ENCODE measurements at regions of chr6 and their contacts with region 1.

Region 1: DNA sequence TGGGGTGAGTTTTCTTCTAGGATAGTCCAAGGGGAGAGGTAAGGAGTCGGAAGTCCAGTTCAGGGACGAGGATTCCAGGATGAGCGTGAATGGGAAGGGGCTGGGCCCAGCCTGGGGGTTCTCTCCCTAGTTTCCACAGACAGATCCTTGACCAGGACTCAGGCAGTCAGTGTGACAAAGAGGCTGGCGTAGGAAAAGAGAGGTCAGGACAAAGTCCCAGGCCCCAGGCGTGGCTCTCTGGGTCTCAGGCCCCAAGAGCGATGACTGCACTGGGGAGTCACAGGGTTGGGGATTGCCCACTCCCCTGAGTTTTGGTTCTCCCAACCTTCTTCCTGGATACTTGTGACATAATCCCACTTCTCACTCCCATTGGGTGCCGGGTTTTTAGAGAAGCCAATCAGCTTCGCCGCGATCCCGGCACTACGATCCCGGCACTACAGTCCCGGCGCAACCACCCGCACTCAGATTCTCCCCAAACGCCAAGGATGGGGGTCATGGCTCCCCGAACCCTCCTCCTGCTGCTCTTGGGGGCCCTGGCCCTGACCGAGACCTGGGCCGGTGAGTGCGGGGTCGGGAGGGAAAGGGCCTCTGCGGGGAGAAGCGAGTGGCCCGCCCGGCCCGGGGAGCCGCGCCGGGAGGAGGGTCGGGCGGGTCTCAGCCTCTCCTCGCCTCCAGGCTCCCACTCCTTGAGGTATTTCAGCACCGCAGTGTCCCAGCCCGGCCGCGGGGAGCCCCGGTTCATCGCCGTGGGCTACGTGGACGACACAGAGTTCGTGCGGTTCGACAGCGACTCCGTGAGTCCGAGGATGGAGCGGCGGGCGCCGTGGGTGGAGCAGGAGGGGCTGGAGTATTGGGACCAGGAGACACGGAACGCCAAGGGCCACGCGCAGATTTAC is 46.2 kb upstream of the TRIM26 start:
- DNase-seq: peak; percentile 58
- ATAC-seq: peak; percentile 94
- H3K4me3 Mint-ChIP-seq: peak overlapping the region; percentile 98
- H3K27ac Mint-ChIP-seq: peak overlapping the region; percentile 97
- H3K4me1 Mint-ChIP-seq: peaks cover 36% of the 10 kb centered on the region
- H3K27me3 Mint-ChIP-seq: no peaks in the 10 kb centered on the region
- CTCF ChIP-seq: no peak

Region 2: DNA sequence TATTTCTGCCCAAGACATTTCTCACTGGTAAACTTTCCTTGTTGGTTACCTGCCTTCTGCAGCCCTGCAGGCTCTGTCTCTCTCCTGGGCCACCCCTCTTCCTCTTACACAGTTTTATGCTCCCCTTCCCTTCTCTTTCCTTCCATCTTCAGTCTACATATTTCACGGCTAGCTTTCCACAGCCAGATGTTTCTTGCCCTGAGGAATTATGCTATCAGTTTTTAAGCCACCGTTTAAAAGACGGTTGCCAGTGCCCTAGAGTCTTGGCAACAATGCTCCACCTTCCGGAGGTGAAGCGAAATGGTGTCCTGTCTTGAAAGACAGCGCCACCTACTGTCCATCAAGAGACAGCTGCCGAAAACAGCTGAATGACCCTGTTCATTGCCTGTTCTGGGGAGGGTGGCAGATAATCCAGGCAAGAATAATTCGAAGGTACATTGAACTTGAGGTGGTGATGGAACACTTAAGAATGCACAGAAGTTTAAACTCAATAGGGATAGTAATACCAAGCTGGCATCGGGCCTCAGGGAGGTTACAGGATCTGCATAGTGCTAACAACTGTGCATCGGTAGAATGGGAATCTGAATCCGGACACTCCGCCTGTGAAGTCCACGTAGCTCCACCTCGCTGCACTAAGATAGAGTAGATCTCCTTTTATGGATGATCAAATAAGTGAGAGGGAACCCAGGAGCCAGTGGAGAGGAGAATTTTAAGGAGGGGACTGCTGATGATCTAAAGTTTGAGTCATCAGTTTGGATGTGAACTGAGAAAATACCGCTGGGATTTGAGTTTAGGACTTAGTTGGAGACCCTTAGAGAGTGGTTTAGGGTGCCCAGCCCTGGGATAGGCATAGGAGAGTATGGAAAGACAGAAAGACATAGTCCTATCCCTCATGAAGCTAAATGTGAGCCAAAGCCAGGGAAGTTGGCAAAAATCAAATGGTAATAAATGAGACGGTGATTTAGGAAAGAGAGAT is 128.2 kb before region 1 on chr6:
- CTCF ChIA-PET with region 1: no interaction called
- POLR2A ChIA-PET with region 1: no interaction called
- intact Hi-C with region 1: loop called (anchors 1 kb)
- DNase-seq: no peak
- ATAC-seq: peak; percentile 89
- H3K4me3 Mint-ChIP-seq: no peak overlapping the region
- H3K27ac Mint-ChIP-seq: no peak overlapping the region
- H3K4me1 Mint-ChIP-seq: peaks cover 15% of the 10 kb centered on the region
- H3K27me3 Mint-ChIP-seq: peaks cover 62% of the 10 kb centered on the region
- CTCF ChIP-seq: peak; percentile 83

Region 3: DNA sequence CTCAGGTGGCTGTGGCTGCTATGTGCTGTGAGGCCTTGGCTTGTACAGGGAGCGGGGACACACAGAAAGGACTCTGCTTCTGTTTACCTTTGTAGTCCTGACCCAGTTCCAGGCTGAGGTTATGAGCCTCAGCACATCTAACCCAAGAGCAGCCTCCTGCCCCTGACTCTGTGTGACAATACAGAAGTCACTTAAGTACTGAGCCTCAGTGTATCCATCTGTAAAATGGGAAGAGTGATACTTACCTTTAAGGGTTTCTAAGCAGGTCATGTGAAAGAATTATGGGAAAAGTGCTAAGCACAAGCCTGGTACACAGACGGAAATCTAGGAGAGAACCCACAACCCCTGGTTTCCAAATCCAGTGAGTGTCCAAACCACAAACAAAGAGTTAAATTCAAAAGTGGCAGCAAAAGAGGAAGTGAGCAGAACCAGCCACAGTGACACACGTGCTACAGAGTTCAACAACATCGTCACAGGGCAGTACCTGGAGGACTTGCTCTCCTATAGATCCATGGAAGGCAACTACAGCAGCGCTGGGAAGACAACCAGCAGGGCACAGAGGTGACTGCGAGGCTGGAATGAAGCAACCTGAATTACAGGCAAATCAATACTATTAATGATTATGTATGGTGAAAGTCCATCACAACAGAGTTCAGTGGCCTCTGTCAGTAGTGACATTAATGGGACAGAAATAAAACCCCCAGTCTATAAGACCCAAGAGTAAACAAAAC is 58.7 kb before region 1 on chr6:
- CTCF ChIA-PET with region 1: no interaction called
- POLR2A ChIA-PET with region 1: no interaction called
- intact Hi-C with region 1: loop called (anchors 2 kb)
- DNase-seq: no peak
- ATAC-seq: peak; percentile 93
- H3K4me3 Mint-ChIP-seq: peak overlapping the region; percentile 48
- H3K27ac Mint-ChIP-seq: peak overlapping the region; percentile 83
- H3K4me1 Mint-ChIP-seq: peaks cover 44% of the 10 kb centered on the region
- H3K27me3 Mint-ChIP-seq: no peaks in the 10 kb centered on the region
- CTCF ChIP-seq: no peak

Region 4: GRCh38 chr6:30326526-30327260 is 67.3 kb after region 1 on chr6 and contains the start of gene TRIM39:
- CTCF ChIA-PET with region 1: no interaction called
- POLR2A ChIA-PET with region 1: interaction called, 5 read pairs
- intact Hi-C with region 1: loop called (anchors 1 kb)
- DNase-seq: peak; percentile 90
- ATAC-seq: peak; percentile 68
- H3K4me3 Mint-ChIP-seq: peak within 1 kb of the TSS; percentile 96
- H3K27ac Mint-ChIP-seq: peak within 1 kb of the TSS; percentile 99
- H3K4me1 Mint-ChIP-seq: peaks cover 57% of the 10 kb centered on the region
- H3K27me3 Mint-ChIP-seq: no peaks in the 10 kb centered on the region
- CTCF ChIP-seq: no peak
- total RNA-seq, gene TRIM39: 21.6 and 22.0 TPM in 2 replicates

Measured in activated B cell treated with CpG ODN at 0.5 μM for 24 hours (primary cell).